Left colon (tissue), 2 donors: ENCODE measurements at regions of chr4 and their contacts with region 1.

Region 1: GRCh38 chr4:174714393-174715211 is 114.4 kb downstream of the GLRA3 start:
- DNase-seq: peak in 1 of 2 donors; percentile 11
- ATAC-seq: peak; percentile 61

Region 2: GRCh38 chr4:174365018-174365587 is 349.5 kb before region 1 on chr4:
- intact Hi-C with region 1: loop called in 1 of 2 experiments (anchors 10 kb)
- DNase-seq: no peak
- ATAC-seq: no peak

Region 3: DNA sequence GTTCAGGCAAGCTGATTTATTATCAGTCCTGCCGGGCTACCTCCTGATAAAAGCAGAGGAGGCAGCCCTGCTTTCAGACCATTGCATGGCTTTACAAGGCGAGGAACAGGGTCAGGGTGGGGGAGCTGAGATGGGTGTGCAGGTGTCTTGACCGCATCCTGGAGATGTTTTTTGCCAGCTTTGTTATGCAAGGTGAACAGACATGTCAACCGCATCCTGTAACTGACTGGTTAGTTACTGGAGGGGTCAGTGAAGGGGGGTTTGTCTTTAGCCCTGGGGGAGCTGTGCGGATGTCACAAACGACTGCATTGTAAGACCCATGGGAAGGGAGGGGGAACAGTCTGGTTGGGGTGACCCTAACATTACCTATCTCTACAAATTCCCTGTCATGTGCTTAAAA is 213.6 kb after region 1 on chr4:
- intact Hi-C with region 1: no loop called
- DNase-seq: no peak
- ATAC-seq: no peak